CD4-positive, alpha-beta T cell (primary cell): ENCODE measurements at regions of chr2 and their contacts with region 1.

Region 1: GRCh38 chr2:161938339-161938738 is 135.7 kb downstream of the DPP4 start:
- DNase-seq: no peak
- ATAC-seq: no peak
- H3K4me3 ChIP-seq: no peak overlapping the region
- H3K4me3 Mint-ChIP-seq: no peak overlapping the region
- H3K27ac ChIP-seq: no peak overlapping the region
- H3K27ac Mint-ChIP-seq: no peak overlapping the region
- H3K4me1 ChIP-seq: no peaks in the 10 kb centered on the region
- H3K4me1 Mint-ChIP-seq: no peaks in the 10 kb centered on the region
- H3K27me3 ChIP-seq: no peaks in the 10 kb centered on the region
- H3K27me3 Mint-ChIP-seq: peaks cover 5% of the 10 kb centered on the region
- CTCF ChIP-seq: no peak

Region 2: GRCh38 chr2:161913865-161914264 is 24.5 kb before region 1 on chr2:
- CTCF ChIA-PET with region 1: no interaction called
- POLR2A ChIA-PET with region 1: no interaction called
- intact Hi-C with region 1: loop called in 1 of 2 experiments (anchors 2 kb)
- DNase-seq: no peak
- ATAC-seq: no peak
- H3K4me3 ChIP-seq: no peak overlapping the region
- H3K4me3 Mint-ChIP-seq: no peak overlapping the region
- H3K27ac ChIP-seq: no peak overlapping the region
- H3K27ac Mint-ChIP-seq: no peak overlapping the region
- H3K4me1 ChIP-seq: no peaks in the 10 kb centered on the region
- H3K4me1 Mint-ChIP-seq: no peaks in the 10 kb centered on the region
- H3K27me3 ChIP-seq: no peaks in the 10 kb centered on the region
- H3K27me3 Mint-ChIP-seq: no peaks in the 10 kb centered on the region
- CTCF ChIP-seq: no peak